ENCODE measurements at regions of chr17 and their contacts with region 1.

Region 1: GRCh38 chr17:76868176-76868668 is at the start of gene MGAT5B:
- DNase-seq: peak; percentile 86
- ATAC-seq: peak; percentile 93
- total RNA-seq, gene MGAT5B: 1.4 TPM

Region 2: DNA sequence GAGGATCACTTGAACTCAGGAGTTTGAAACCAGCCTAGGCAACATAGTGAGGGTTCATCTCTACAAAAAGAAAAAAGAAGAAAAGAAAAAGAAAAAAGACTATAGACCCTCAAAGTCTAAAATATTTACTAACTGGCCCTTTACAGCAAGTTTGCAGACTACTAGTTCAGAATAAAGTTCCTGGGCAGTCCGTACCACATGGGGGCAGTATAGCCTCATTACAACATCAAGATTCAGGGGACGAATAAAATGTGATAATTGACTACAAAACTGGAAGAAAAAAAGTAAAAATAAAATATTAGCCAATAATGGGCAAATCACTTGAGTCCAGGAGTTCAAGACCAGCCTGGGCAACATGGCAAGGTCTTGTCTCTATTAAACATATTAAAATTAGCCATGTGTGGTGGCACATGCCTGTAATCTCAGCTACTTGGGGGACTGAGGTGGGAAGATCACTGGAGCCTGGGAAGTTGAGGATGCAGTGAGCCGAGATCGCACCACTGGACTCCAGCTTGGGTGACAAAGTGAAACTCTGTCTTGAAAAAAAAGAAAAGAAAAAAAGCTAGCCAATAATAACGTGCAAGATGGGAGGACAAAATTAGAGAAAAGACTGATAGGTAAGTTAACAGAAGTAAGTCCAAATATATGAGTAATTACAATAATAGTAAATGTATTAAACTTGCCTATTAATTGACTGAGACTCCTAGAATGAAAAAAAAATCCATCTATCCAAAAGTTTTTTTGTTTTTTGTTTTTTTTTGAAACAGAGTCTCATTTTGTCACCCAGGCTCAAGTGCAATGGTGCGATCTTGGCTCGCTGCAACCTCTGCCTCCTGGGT is 143.2 kb after region 1 on chr17:
- intact Hi-C with region 1: no loop called
- DNase-seq: no peak
- ATAC-seq: no peak

Region 3: GRCh38 chr17:77068915-77069314 is 200.7 kb after region 1 on chr17:
- intact Hi-C with region 1: loop called (anchors 2 kb)
- DNase-seq: no peak
- ATAC-seq: no peak

Region 4: DNA sequence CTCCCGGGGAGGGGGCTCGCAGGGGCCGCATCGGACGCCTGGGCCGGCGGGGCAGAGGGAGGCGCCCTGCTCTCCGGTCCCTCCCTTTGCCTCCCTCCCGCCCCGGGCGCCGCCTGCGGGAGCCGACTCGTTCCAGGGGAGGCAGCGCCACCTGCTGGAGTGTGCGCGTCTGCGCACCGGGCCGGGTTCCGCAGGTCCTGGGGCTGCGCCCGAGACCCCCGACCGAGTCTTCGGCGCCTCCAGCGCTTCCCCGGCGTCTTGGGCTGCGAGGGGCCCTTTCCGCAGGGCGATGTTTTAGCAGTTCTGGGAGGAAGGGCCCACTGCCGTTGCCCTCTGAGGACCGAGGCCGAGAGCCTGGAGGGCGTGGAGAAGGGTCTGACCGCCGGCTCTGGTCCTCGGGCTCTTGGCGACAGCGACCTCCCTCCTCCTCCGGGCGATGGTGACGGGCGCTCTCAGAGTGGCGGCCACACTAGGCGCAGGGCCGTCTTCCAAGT is 378.9 kb after region 1 on chr17:
- intact Hi-C with region 1: loop called (anchors 10 kb)
- DNase-seq: peak; percentile 94
- ATAC-seq: peak; percentile 90

Measured in sciatic nerve (tissue), 2 donors.